PC-3 (cell line): ENCODE measurements at regions of chr11 and their contacts with region 1.

Region 1: GRCh38 chr11:18634140-18635032 is at the start of gene SPTY2D1:
- DNase-seq: peak; percentile 98
- ATAC-seq: peak; percentile 94
- H3K4me3 ChIP-seq: peak within 1 kb of the TSS; percentile 86
- H3K27ac ChIP-seq: peak within 1 kb of the TSS; percentile 64
- H3K4me1 ChIP-seq: peaks cover 10% of the 10 kb centered on the region
- H3K27me3 ChIP-seq: no peaks in the 10 kb centered on the region
- CTCF ChIP-seq: no peak
- total RNA-seq, gene SPTY2D1: 15.6 and 16.6 TPM in 2 replicates

Region 2: DNA sequence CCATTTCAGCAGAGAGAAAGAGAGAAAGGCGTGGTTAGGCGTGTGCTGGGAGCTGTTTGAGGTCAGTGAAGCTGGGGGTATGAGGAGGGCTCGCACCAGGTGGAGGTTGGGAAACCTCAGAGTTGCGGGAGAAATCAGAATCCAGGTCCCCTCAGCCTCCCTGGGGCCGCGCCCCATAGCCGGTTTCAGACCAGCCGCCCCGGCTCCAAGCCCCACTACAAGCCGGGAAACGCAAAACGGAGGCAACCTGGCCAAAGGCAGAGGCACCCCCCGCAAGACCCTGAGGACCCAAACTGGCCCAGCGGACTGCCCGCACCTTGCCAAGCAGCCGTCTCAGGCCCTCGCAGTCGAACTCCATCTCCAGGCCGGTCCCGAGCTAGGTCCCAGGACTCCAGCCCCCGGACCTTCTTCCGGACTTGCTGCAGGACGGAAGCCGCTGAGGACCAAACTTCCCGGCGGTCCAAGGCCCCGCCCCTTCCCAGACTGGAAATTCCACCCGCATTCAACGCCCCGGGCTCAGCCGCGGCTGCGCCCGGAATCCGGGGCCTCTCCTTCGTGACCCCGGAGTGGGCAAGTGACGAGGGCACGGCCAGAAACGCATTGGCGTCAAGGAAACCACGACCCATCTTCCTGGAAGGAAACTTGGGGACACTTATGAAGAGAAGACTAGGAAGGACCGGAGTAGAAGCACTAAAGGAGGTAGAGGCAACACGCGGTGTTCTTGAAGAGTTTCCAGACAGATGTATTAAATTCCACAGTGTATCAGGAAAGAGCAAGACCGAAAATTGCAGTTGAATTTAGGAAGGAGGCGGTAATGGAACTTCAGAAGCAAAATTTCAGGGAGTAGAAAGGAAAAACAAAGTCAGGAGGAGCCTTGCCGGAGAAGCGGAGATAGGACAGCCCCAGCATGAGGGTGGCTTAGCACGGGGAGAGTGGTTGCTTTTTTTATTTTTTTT is 45.8 kb before region 1 on chr11 and contains the start of gene UEVLD:
- CTCF ChIA-PET with region 1: no interaction called
- POLR2A ChIA-PET with region 1: no interaction called
- intact Hi-C with region 1: loop called (anchors 1 kb)
- DNase-seq: peak; percentile 85
- ATAC-seq: peak; percentile 89
- H3K4me3 ChIP-seq: peak within 1 kb of the TSS; percentile 80
- H3K27ac ChIP-seq: peak within 1 kb of the TSS; percentile 41
- H3K4me1 ChIP-seq: peaks cover 19% of the 10 kb centered on the region
- H3K27me3 ChIP-seq: no peaks in the 10 kb centered on the region
- CTCF ChIP-seq: no peak
- total RNA-seq, gene UEVLD: 15.6 and 22.2 TPM in 2 replicates

Region 3: GRCh38 chr11:18692941-18693760 is 58.8 kb after region 1 on chr11:
- CTCF ChIA-PET with region 1: no interaction called
- POLR2A ChIA-PET with region 1: interaction called, 21 read pairs
- intact Hi-C with region 1: loop called (anchors 1 kb)
- DNase-seq: no peak
- ATAC-seq: no peak; the same call in 1 of the 2 replicates
- H3K4me3 ChIP-seq: no peak overlapping the region
- H3K27ac ChIP-seq: no peak overlapping the region
- H3K4me1 ChIP-seq: peaks cover 6% of the 10 kb centered on the region; the same call in 1 of the 2 replicates
- H3K27me3 ChIP-seq: no peaks in the 10 kb centered on the region
- CTCF ChIP-seq: no peak

Region 4: DNA sequence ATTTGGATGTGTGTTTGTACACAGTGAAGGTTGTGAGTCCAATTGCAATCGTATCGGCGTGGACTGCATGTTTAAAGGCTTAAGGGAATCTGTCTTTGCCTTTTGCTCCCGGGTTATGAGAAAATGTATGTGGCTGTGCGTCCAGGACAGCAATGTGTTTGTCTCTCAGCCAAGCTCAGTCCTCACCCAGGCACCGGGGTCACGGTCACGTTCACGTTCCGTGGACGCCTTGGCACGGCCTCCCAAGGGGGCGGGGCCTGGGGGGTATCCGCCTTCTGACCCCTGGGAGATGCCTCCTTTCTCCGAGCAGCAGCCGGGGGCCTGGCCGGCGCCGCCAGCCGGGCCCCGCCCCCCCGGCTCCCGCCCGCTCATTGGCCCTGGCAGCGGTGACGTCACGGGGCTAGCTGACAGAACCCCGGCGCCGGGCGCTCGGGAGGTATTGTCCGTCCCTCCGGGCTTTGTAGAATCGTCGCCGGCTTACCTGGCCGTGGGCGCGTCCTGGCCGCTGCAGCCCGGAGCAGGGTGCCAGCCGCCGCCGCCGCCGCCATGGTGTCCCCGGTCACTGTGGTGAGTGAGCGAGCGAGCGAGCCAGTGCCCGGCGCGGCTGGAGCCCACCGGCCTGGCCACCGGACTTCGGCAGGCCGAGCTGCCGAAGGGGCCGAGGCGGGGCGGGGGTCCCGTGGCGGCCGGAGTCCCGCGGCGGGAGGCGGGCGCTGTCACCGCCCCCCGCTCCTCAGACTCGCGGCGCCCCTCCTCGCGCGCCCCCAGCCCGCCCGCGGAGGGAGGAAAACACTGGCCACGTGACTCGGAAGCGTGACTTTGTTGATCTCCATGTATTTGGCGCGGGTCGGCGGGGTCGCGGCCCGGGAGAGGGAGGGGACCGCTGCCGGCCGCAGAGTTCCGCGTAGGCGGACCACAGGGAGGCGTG is 64.2 kb after region 1 on chr11 and contains the start of gene TMEM86A:
- CTCF ChIA-PET with region 1: no interaction called
- POLR2A ChIA-PET with region 1: no interaction called
- intact Hi-C with region 1: loop called (anchors 1 kb)
- DNase-seq: peak; percentile 83
- ATAC-seq: peak; percentile 91
- H3K4me3 ChIP-seq: peak within 1 kb of the TSS; percentile 82
- H3K27ac ChIP-seq: no peak within 1 kb of the TSS
- H3K4me1 ChIP-seq: peaks cover 17% of the 10 kb centered on the region
- H3K27me3 ChIP-seq: no peaks in the 10 kb centered on the region
- CTCF ChIP-seq: no peak
- total RNA-seq, gene TMEM86A: 1.6 and 2.9 TPM in 2 replicates